ENCODE measurements at regions of chr4 and their contacts with region 1.

Region 1: GRCh38 chr4:184329659-184330400 is 112.2 kb upstream of the ENPP6 start:
- DNase-seq: peak; percentile 89

Region 2: DNA sequence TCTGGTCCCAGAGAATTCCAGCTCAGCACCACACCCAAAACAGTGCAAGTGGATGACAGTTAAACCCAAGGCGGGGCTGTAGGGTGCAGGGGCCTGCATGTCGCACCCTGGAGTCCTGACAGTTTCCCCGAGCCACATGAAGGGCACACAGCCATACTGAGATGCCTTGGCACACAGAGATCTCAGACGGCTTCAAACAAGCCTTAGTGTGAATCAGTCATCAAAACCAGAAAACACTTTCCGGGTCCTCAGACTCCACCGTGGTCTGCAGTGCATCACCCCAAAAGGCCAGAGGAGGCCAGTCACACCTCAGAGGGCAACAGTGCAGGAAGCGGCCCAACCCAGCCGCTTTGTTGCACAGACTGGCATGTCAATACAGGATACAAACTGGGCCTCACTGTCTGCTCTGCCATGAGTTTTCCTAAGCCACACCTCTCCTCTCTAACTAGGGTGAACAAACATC is 47.5 kb before region 1 on chr4:
- intact Hi-C with region 1: no loop called
- DNase-seq: no peak

Region 3: DNA sequence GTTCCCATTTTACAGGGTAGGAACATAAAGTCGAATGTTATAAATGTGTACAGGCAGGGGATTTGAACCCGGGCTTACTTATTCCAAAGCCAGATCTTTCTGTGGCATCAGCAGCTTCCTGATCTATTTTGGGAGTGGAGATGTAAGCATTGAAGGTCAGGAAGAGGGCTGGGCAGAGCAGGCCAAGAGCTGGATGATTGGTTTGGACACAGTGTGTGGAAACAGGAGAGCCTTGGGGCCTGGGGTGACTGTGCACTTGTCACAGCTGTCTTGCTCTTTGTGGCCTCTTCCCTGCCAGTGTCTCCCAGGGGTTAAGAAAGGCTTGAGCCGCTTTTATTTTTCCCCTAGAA is 15.7 kb after region 1 on chr4:
- intact Hi-C with region 1: loop called in 1 of 2 experiments (anchors 1 kb)
- DNase-seq: no peak

Region 4: DNA sequence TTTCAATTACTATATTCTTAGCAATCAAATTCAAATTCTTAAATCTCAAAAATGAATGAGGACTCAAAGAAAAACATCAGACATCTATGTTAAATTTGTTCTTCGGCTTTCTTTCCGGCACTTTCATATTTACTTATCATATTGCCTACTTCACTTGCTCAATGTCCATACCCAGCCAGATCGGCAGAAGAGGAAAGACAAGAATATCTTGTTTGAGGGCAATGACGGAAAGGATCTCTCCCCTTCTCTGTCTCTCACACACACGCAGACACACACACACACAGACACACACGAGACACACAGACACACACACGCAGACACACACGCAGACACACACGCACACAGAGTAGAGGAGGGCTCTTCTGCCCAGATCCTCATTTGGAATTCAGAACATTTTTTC is 157.7 kb after region 1 on chr4:
- intact Hi-C with region 1: no loop called
- DNase-seq: no peak

Measured in posterior vena cava (tissue), 2 donors.